ENCODE measurements at regions of chr6 and their contacts with region 1.

Region 1: DNA sequence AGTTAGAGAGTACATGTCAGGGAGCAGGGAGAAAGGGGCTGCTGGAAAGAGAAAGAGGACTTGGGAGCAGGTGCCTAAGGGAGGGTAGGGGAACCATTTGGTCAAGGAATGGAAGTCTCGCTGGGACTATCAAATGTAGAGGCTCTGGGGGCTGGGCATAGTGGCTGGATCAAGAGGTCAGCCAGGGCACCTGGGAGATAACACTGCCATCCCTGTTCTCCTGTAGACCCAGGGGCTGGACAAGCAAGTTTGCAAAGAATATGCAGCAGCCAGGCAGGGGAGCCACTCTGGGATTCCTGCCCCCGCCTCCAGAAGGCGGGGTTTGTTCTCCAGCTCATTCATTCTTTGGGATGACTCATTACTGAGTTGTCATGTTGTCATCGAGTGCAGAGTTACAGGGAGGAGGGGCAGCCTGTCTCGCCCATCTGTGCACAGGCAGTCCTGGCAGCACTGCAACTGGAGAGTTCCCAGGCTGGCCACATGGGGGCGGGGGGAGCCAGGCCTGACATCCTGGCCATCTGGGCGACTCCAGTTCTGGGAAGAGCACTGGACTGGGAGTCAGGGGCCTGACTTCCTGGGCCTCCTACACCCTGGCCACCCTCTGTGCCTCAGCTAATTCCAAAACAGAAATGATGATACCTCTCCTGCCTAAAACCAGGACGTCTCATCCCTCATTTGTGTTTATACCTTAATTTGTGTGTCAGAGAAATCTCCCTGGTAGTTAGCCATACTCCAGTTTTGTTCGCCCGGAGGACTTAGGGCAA is 28.2 kb upstream of the ZFAND3 start:
- H3K4me3 ChIP-seq: no peak overlapping the region
- H3K27ac ChIP-seq: no peak overlapping the region
- H3K4me1 ChIP-seq: peaks cover 5% of the 10 kb centered on the region; the same call in 1 of the 2 replicates
- CTCF ChIP-seq: peak; percentile 95

Region 2: GRCh38 chr6:37819177-37819823 is 28.0 kb after region 1 on chr6 and contains the start of gene ZFAND3:
- CTCF ChIA-PET with region 1: interaction called, 8 read pairs
- POLR2A ChIA-PET with region 1: interaction called, 11 read pairs
- H3K4me3 ChIP-seq: peak within 1 kb of the TSS; percentile 89
- H3K27ac ChIP-seq: peak within 1 kb of the TSS; percentile 95
- H3K4me1 ChIP-seq: peaks cover 23% of the 10 kb centered on the region
- CTCF ChIP-seq: peak; percentile 40; the same call in 1 of the 2 replicates

Region 3: DNA sequence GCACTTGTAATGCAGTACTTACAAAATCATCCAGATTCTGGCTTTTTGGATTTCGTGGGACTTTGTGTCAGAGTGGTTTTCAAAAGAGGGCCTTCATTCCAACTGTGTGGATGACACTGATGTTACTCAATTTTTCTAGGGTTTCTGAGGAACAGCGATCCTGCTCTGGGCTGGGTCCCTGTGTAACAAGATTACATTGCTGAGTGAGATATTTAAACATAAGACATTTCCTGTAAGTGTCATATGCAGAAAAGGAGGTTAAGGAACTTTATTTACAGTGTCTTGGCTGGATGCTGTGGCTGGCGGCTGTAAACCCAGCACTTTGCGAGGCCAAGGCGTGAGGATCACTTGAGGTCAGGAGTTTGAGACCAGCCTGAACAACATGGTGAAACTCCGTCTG is 34.9 kb after region 1 on chr6:
- CTCF ChIA-PET with region 1: interaction called, 10 read pairs
- POLR2A ChIA-PET with region 1: no interaction called
- H3K4me3 ChIP-seq: no peak overlapping the region
- H3K27ac ChIP-seq: no peak overlapping the region
- H3K4me1 ChIP-seq: peaks cover 34% of the 10 kb centered on the region
- CTCF ChIP-seq: no peak

Region 4: DNA sequence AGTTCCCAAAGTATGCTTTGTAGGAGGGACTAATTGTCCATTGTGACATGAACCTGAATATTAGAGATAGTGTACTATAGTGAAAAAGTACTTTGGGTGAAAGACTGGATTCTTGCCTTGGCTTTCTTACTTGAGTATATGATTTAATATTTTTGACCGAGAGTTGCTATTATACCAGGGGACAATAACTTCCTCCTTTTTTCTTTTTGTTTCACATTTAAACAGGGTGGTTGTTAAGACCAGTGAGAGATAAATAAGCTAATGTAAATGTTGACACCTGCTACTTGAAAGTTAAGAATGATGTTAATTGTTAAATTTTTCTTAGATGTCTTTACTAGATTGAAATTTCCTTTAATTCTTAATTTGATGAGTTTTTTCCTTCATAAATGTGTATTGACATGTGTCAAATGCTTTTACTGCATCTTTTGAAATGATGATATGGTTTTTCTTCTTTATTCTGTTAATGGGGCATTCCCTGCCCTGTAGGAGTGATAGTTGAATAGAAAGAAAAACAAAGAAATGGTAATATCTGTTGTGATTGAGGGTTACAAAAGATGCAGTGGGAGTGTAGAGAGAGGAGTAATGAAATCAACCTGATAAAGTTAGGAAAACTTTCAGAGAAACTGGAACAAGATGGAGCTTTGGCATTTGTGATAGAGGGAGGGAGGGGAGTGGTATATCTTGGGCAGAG is 76.6 kb after region 1 on chr6:
- CTCF ChIA-PET with region 1: interaction called, 12 read pairs
- POLR2A ChIA-PET with region 1: no interaction called
- H3K4me3 ChIP-seq: no peak overlapping the region
- H3K27ac ChIP-seq: no peak overlapping the region
- H3K4me1 ChIP-seq: peaks cover 17% of the 10 kb centered on the region
- CTCF ChIP-seq: no peak

Region 5: GRCh38 chr6:38016824-38017223 is 225.5 kb after region 1 on chr6:
- CTCF ChIA-PET with region 1: interaction called, 12 read pairs
- POLR2A ChIA-PET with region 1: no interaction called
- H3K4me3 ChIP-seq: no peak overlapping the region
- H3K27ac ChIP-seq: no peak overlapping the region
- H3K4me1 ChIP-seq: peaks cover 19% of the 10 kb centered on the region
- CTCF ChIP-seq: no peak